WTC11 (cell line): ENCODE measurements at regions of chr1 and their contacts with region 1.

Region 1: GRCh38 chr1:23216771-23217420 is 406 bp downstream of the HTR1D start:
- DNase-seq: peak; percentile 72
- ATAC-seq: peak; percentile 63
- H3K4me3 Mint-ChIP-seq: peak overlapping the region; percentile 65
- H3K27ac Mint-ChIP-seq: no peak overlapping the region
- H3K4me1 Mint-ChIP-seq: peaks cover 20% of the 10 kb centered on the region
- H3K27me3 Mint-ChIP-seq: peaks cover 27% of the 10 kb centered on the region
- CTCF ChIP-seq: peak; percentile 94

Region 2: DNA sequence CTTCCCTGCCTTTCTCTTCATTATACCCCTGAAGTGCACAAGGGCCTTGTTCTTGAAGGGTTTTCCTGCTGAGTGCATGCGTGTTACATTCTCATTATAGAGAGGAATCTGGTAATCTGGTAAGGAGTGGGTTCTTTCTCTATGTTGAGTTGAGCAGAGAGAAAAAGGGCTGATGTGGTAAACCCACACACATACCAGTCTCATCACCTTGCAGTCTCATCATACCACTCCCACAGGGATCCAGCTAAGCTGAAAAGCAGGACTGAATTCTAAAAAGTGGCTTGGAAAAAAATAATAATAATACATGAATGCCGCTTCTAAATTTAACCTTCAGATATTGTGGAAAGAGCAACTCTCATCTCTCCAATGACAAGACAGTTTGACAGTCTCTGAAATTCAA is 10.9 kb after region 1 on chr1:
- CTCF ChIA-PET with region 1: interaction called, 31 read pairs
- POLR2A ChIA-PET with region 1: interaction called, 7 read pairs
- DNase-seq: no peak
- ATAC-seq: no peak
- H3K4me3 Mint-ChIP-seq: no peak overlapping the region
- H3K27ac Mint-ChIP-seq: no peak overlapping the region
- H3K4me1 Mint-ChIP-seq: peaks cover 21% of the 10 kb centered on the region
- H3K27me3 Mint-ChIP-seq: peaks cover 4% of the 10 kb centered on the region; the same call in 1 of the 2 replicates
- CTCF ChIP-seq: no peak

Region 3: GRCh38 chr1:23251812-23252211 is 34.9 kb after region 1 on chr1:
- CTCF ChIA-PET with region 1: interaction called, 10 read pairs
- POLR2A ChIA-PET with region 1: no interaction called
- DNase-seq: no peak
- ATAC-seq: no peak
- H3K4me3 Mint-ChIP-seq: no peak overlapping the region
- H3K27ac Mint-ChIP-seq: no peak overlapping the region
- H3K4me1 Mint-ChIP-seq: peaks cover 16% of the 10 kb centered on the region
- H3K27me3 Mint-ChIP-seq: peaks cover 6% of the 10 kb centered on the region
- CTCF ChIP-seq: no peak

Region 4: DNA sequence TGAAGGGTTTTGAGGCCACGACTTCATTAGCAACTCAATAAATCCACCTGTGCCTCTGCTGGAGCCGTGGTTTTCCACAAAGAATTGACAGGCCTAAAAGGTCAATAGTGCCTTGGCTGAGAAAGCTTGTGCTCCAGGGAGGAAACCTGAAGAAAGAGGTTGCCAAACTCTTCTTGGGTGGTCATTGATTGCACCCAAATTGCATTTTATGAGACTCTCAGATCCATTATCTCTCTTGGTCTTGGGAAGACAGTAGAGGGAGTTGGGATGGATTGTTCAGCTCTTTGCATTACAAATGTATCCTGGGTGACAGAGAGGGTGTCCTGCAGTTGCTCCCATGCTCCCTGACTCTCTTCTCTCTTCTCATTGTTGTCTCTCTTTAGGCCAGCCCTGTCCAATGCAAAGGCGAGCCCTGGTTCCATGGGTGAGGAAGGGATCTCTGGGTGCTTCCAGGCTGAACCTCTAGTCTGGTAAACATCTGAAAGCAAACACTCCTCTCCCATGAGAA is 46.5 kb after region 1 on chr1:
- CTCF ChIA-PET with region 1: interaction called, 48 read pairs
- POLR2A ChIA-PET with region 1: interaction called, 8 read pairs
- DNase-seq: no peak
- ATAC-seq: peak; percentile 87
- H3K4me3 Mint-ChIP-seq: peak overlapping the region; percentile 42; the same call in 1 of the 2 replicates
- H3K27ac Mint-ChIP-seq: peak overlapping the region; percentile 69
- H3K4me1 Mint-ChIP-seq: peaks cover 44% of the 10 kb centered on the region
- H3K27me3 Mint-ChIP-seq: no peaks in the 10 kb centered on the region; the same call in 1 of the 2 replicates
- CTCF ChIP-seq: no peak

Region 5: GRCh38 chr1:23273450-23274133 is 56.7 kb after region 1 on chr1:
- CTCF ChIA-PET with region 1: interaction called, 17 read pairs
- POLR2A ChIA-PET with region 1: no interaction called
- DNase-seq: no peak
- ATAC-seq: no peak
- H3K4me3 Mint-ChIP-seq: no peak overlapping the region
- H3K27ac Mint-ChIP-seq: no peak overlapping the region
- H3K4me1 Mint-ChIP-seq: peaks cover 4% of the 10 kb centered on the region
- H3K27me3 Mint-ChIP-seq: no peaks in the 10 kb centered on the region
- CTCF ChIP-seq: no peak

Region 6: GRCh38 chr1:23278717-23279116 is 61.8 kb after region 1 on chr1:
- CTCF ChIA-PET with region 1: interaction called, 15 read pairs
- POLR2A ChIA-PET with region 1: no interaction called
- DNase-seq: no peak
- ATAC-seq: no peak
- H3K4me3 Mint-ChIP-seq: no peak overlapping the region
- H3K27ac Mint-ChIP-seq: no peak overlapping the region; the same call in 1 of the 2 replicates
- H3K4me1 Mint-ChIP-seq: no peaks in the 10 kb centered on the region
- H3K27me3 Mint-ChIP-seq: no peaks in the 10 kb centered on the region
- CTCF ChIP-seq: no peak